ENCODE measurements at regions of chr17 and their contacts with region 1.

Region 1: DNA sequence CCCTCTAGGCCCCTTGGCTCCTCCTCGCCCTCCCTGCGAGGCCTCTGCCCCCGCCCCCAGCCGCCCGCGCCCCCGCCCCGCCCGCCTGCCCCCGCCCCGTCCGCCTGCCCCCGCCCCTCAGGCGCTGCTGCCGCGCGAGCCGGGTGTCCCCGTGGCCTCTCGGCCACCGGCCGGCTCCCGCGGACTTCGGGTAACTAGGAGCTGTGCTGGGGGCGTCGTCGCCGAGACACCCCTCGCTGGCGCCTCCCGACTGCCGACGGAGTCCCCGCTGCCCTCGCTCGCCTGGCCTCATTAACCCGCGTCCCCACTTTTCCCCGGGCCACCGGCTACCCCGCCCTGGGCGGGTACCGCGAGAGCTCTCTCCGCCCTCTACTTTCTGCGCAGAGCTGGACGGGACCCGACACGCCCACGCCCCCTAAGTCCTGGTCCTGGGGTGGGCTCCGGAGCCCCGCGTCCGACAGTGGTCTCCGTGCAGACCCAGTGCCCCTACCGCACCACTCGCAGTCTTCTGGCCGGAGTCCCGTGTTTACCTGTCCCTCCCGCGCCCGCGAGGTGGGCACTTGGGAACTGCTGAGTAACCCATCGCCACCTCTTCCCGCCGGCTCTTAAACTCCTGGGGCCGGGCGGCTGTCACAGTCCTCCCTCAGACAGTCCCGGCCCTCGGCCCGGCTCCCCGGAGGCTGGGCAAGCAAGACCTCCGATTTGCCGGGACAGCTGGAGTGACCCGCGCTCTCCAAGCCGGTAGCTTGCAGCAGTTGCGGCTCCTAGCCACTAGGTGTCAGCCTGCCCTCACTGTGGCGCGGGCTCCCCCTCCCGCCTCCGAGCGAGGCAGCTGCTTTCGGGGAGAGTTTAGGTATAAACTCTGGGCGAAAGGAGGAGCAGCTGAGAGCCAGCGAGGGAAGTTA is at the start of gene TLCD1:
- DNase-seq: no peak
- ATAC-seq: peak; percentile 44
- H3K4me3 ChIP-seq: peak within 1 kb of the TSS; percentile 72
- H3K27ac ChIP-seq: peak within 1 kb of the TSS; percentile 94
- H3K4me1 ChIP-seq: peaks cover 23% of the 10 kb centered on the region
- H3K27me3 ChIP-seq: no peaks in the 10 kb centered on the region
- CTCF ChIP-seq: peak; percentile 99 to 100 (median 99); a peak in 5 of 6 replicates
- EP300 ChIP-seq: no peak
- POLR2A ChIP-seq: no peak; the same call in 1 of the 2 replicates
- RAD21 ChIP-seq: peak; percentile 98
- polyA plus RNA-seq, gene TLCD1: 2.9 to 7.1 TPM

Region 2: DNA sequence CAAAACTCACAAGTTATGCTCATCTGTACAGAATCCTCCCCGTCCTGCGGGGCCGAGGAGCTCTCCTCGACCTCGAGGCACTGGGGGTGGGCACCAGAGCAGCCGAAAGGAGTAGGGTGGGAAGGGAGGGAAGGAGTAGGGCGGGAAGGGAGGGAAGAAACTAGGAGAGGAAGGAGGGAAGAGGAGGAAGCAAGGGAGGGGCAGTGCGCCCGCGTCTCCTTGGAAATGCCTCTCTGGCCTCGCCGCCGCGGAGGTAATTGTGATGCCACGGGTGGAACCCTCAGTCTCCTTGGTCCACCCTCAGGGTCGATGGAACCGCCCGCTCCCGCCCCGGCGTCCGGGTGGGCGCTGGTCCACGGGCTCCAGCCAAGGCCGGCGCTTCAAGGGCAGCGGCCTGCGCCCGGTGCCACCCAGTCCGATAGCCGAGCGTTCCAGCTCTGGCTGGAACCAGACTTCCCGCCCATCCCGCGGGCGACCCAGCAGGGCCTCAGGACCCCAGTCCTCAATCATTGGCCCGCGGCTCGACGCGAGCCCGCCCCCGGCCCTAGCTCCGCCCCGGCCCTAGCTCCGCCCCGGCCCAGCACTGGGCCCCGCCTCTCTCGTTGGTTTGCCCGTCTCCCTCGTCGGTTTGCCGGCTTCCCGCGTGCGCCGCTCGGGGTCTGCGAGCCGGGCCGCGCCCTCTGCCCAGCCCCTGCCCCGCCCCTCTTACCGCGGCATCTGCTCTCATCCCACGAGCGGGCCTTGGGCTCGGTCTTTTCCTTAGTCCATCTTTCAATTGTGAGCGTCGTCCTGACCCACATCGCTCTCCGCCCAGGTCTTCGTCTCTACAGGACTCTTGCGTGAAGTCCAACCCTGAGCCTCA is 15.4 kb before region 1 on chr17:
- CTCF ChIA-PET with region 1: interaction called, 17 read pairs
- POLR2A ChIA-PET with region 1: interaction called, 13 read pairs
- RAD21 ChIA-PET with region 1: interaction called, 20 read pairs
- SMC1A ChIA-PET with region 1: interaction called, 13 read pairs
- in situ Hi-C with region 1: no loop called
- intact Hi-C with region 1: no loop called
- DNase-seq: peak; percentile 50
- ATAC-seq: peak; percentile 94
- H3K4me3 ChIP-seq: peak overlapping the region; percentile 73
- H3K27ac ChIP-seq: peak overlapping the region; percentile 61
- H3K4me1 ChIP-seq: peaks cover 9% of the 10 kb centered on the region
- H3K27me3 ChIP-seq: no peaks in the 10 kb centered on the region
- CTCF ChIP-seq: no peak
- EP300 ChIP-seq: no peak
- POLR2A ChIP-seq: peak; percentile 62; the same call in 1 of the 2 replicates
- RAD21 ChIP-seq: no peak

Region 3: DNA sequence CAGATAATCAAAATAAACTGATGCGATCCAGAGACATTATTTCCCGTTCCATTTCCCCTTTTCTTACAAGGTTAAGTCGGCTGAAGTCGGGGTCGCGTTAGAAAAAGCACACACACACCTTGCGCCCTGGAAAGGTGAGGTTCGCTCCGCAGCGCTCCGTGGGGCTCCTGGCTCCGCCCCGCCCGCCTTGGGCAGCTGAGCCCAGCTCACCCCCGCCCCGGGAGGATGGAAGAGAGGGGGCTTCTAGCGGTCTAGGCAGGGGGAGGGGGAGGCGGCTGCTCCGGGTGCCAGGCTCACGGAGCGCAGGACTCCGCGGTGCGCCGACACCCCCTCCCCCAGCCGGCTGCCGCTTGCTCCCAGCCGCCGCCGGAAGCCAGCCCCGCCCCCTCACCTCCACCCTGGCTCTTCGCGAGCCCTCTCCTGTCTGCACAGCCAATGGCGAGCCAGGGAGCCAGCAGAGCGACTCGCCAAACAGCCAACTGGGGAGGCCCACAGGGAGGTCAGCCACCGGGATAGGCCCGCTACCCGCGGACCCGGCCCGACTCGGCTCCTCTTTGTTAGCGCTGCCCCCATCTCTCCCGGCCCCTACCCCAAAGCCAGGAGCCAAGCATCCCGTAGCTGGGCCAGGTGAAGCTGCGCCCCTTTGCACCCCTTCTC is 85.7 kb after region 1 on chr17:
- CTCF ChIA-PET with region 1: interaction called, 7 read pairs
- POLR2A ChIA-PET with region 1: interaction called, 6 read pairs
- RAD21 ChIA-PET with region 1: interaction called, 14 read pairs
- SMC1A ChIA-PET with region 1: interaction called, 9 read pairs
- in situ Hi-C with region 1: no loop called
- intact Hi-C with region 1: no loop called
- DNase-seq: peak; percentile 78
- ATAC-seq: peak; percentile 100
- H3K4me3 ChIP-seq: peak overlapping the region; percentile 75
- H3K27ac ChIP-seq: peak overlapping the region; percentile 74
- H3K4me1 ChIP-seq: peaks cover 18% of the 10 kb centered on the region
- H3K27me3 ChIP-seq: no peaks in the 10 kb centered on the region
- CTCF ChIP-seq: no peak
- EP300 ChIP-seq: no peak
- POLR2A ChIP-seq: peak; percentile 70; the same call in 1 of the 2 replicates
- RAD21 ChIP-seq: no peak

Region 4: DNA sequence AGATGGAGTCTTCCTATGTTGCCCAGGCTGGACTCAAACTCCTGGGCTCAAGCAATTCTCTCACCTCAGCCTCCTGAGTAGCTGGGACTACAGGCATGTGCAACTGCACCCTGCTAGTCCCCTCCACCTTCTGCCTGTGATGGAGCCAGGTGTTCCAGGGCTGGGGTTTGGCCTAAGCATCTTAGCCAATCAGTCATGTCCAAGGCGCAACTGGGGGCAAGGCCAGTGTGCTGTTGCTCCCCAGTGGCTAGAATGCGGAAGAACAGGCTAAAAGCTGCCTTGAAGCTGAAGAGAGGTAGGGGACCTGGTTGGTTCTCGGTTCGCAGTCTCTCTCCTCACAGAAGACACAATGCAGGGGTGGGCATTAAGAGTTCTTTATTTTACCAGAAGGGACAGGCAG is 152.5 kb after region 1 on chr17:
- CTCF ChIA-PET with region 1: interaction called, 10 read pairs
- POLR2A ChIA-PET with region 1: interaction called, 3 read pairs
- RAD21 ChIA-PET with region 1: interaction called, 6 read pairs
- SMC1A ChIA-PET with region 1: interaction called, 8 read pairs
- in situ Hi-C with region 1: no loop called
- intact Hi-C with region 1: no loop called
- DNase-seq: no peak
- ATAC-seq: peak; percentile 92
- H3K4me3 ChIP-seq: no peak overlapping the region
- H3K27ac ChIP-seq: no peak overlapping the region
- H3K4me1 ChIP-seq: no peaks in the 10 kb centered on the region; the same call in 1 of the 2 replicates
- H3K27me3 ChIP-seq: no peaks in the 10 kb centered on the region
- CTCF ChIP-seq: peak; percentile 52 to 67 (median 55); a peak in 5 of 6 replicates
- EP300 ChIP-seq: no peak
- POLR2A ChIP-seq: no peak
- RAD21 ChIP-seq: peak; percentile 77

Region 5: DNA sequence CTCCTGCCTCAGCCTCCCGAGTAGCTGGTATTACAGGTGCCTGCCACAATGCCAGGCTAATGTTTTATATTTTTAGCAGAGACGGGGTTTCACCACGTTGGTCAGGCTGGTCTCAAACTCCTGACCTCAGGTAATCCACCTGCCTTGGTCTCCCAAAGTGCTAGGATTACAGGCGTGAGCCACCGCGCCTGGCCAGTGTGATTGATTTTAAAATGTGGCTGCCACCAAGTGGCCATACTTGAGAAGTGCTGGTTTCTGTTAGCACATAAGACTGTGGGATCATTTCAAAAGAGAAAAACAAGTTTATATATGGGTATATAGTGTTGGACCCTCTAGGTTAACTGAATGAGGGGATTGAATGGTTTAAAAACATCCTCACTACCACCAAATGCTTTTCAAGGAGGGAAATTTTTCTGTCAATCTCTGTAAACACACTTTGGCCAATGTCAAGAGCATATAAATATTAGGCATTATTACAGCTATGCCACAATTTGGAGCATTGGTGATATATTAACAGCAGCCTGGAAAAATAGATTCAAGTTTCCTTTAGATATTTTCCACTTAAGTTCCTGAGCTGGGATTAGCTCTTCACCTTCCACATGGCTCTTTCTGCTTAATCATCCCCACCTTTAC is 189.9 kb after region 1 on chr17:
- CTCF ChIA-PET with region 1: interaction called, 33 read pairs
- POLR2A ChIA-PET with region 1: interaction called, 4 read pairs
- RAD21 ChIA-PET with region 1: interaction called, 15 read pairs
- SMC1A ChIA-PET with region 1: interaction called, 14 read pairs
- in situ Hi-C with region 1: no loop called
- intact Hi-C with region 1: loop called (anchors 2 kb)
- DNase-seq: no peak
- ATAC-seq: peak; percentile 89
- H3K4me3 ChIP-seq: no peak overlapping the region
- H3K27ac ChIP-seq: no peak overlapping the region
- H3K4me1 ChIP-seq: no peaks in the 10 kb centered on the region
- H3K27me3 ChIP-seq: no peaks in the 10 kb centered on the region
- CTCF ChIP-seq: peak; percentile 55 to 59 (median 57)
- EP300 ChIP-seq: no peak
- POLR2A ChIP-seq: no peak
- RAD21 ChIP-seq: peak; percentile 58

Region 6: DNA sequence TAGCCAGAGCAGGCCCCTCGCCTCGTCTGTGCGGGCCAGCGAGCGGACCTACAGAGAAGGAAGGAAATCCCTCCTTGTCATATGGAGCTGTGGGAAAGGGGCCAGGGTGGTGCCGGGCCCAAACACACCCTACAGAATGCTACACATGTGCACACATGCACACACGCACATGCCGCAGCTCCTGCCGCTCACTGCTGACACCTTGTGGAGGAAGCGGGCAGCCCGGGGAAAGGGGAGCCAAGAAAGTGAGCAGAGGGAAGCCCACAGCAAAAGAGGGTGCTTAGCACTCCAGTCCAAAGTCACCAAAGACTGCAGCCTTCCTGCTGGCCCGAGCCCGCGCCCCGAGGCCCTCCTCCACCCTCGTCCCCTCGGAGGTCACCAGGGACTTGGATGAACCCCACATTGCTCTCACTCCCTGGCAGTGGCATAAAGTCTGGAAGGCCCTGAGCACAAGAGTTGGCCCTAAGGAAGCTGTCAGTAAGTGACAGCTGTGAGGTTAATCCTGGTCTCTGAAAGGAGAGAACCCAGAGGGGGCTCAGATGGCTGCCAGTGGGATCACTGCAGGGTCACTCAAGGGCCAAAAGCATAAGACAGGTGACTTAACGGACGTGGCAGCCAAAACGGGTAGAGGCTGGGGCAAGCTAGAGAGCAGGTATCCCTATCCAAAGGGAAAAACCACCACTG is 385.5 kb after region 1 on chr17:
- CTCF ChIA-PET with region 1: interaction called, 15 read pairs
- POLR2A ChIA-PET with region 1: no interaction called
- RAD21 ChIA-PET with region 1: interaction called, 5 read pairs
- SMC1A ChIA-PET with region 1: interaction called, 5 read pairs
- in situ Hi-C with region 1: no loop called
- intact Hi-C with region 1: loop called (anchors 10 kb)
- DNase-seq: no peak
- ATAC-seq: peak; percentile 93
- H3K4me3 ChIP-seq: no peak overlapping the region
- H3K27ac ChIP-seq: no peak overlapping the region
- H3K4me1 ChIP-seq: no peaks in the 10 kb centered on the region
- H3K27me3 ChIP-seq: no peaks in the 10 kb centered on the region
- CTCF ChIP-seq: peak; percentile 90 to 97 (median 92)
- EP300 ChIP-seq: no peak
- POLR2A ChIP-seq: no peak
- RAD21 ChIP-seq: peak; percentile 70